Activated CD8-positive, alpha-beta T cell treated with anti-CD3 and anti-CD28 coated beads for 36 hours (primary cell): ENCODE measurements at regions of chr18 and their contacts with region 1.

Region 1: DNA sequence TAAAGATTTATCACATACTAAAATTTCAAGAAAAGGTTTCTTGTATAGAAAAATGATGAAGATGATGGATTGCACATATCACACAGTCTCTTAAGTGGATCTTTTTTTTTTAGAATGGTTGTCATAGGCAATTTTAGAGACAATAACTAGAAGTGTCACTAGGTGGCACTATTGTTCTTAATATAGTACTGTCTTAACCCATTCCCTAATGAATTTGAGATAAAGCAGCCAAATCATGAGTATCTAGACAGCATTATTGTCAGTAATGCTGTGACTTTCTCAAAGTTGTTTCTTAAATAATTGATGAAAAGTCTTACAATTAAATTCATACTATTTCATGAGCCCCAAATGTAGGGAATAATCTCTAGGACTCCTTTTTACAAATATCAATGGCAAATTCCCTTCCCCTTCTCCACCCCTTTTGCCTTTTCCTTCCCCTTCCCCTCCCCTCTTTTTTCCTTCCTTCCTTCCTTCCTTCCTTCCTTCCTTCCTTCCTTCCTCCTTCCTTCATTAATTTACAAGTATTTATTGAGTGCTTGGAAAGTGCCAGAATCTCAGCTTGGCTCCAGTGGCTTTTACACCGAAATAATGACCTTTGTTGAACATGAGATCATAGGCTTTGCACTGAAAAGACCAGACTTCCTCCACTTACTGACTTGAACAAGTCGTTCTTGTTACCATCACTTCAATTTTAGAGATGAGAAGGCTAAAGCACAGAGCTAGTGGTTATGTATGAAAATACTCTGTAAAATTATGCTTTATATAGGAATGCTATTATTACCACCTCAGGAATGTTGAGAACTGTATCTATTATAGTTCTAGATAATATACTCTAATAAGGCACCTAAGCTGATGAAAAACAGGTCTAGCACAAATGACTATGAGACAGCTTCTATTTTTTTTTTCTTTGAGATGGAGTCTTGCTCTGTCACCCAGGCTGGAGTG is 19.8 kb downstream of the MYL12B start:
- DNase-seq: no peak
- ATAC-seq: peak; percentile 88
- H3K4me3 Mint-ChIP-seq: no peak overlapping the region
- H3K27ac Mint-ChIP-seq: no peak overlapping the region
- H3K4me1 Mint-ChIP-seq: peaks cover 9% of the 10 kb centered on the region
- H3K27me3 Mint-ChIP-seq: no peaks in the 10 kb centered on the region
- CTCF ChIP-seq: peak; percentile 76

Region 2: GRCh38 chr18:3269241-3269913 is 12.4 kb before region 1 on chr18:
- CTCF ChIA-PET with region 1: no interaction called
- POLR2A ChIA-PET with region 1: no interaction called
- intact Hi-C with region 1: no loop called
- DNase-seq: no peak
- ATAC-seq: no peak
- H3K4me3 Mint-ChIP-seq: peak overlapping the region; percentile 6
- H3K27ac Mint-ChIP-seq: peak overlapping the region; percentile 77
- H3K4me1 Mint-ChIP-seq: peaks cover 82% of the 10 kb centered on the region
- H3K27me3 Mint-ChIP-seq: no peaks in the 10 kb centered on the region
- CTCF ChIP-seq: no peak

Region 3: GRCh38 chr18:3297025-3297984 is 15.6 kb after region 1 on chr18:
- CTCF ChIA-PET with region 1: interaction called, 46 read pairs
- POLR2A ChIA-PET with region 1: interaction called, 3 read pairs
- intact Hi-C with region 1: no loop called
- DNase-seq: peak; percentile 99
- ATAC-seq: peak; percentile 99
- H3K4me3 Mint-ChIP-seq: peak overlapping the region; percentile 92
- H3K27ac Mint-ChIP-seq: peak overlapping the region; percentile 86
- H3K4me1 Mint-ChIP-seq: peaks cover 5% of the 10 kb centered on the region
- H3K27me3 Mint-ChIP-seq: peaks cover 24% of the 10 kb centered on the region
- CTCF ChIP-seq: peak; percentile 83

Region 4: GRCh38 chr18:3340015-3340681 is 58.4 kb after region 1 on chr18:
- CTCF ChIA-PET with region 1: no interaction called
- POLR2A ChIA-PET with region 1: no interaction called
- intact Hi-C with region 1: no loop called
- DNase-seq: no peak
- ATAC-seq: peak; percentile 58
- H3K4me3 Mint-ChIP-seq: no peak overlapping the region
- H3K27ac Mint-ChIP-seq: no peak overlapping the region
- H3K4me1 Mint-ChIP-seq: peaks cover 9% of the 10 kb centered on the region
- H3K27me3 Mint-ChIP-seq: no peaks in the 10 kb centered on the region
- CTCF ChIP-seq: no peak

Region 5: GRCh38 chr18:3821524-3821923 is 539.8 kb after region 1 on chr18:
- CTCF ChIA-PET with region 1: no interaction called
- POLR2A ChIA-PET with region 1: no interaction called
- intact Hi-C with region 1: no loop called
- DNase-seq: no peak
- ATAC-seq: no peak
- H3K4me3 Mint-ChIP-seq: no peak overlapping the region
- H3K27ac Mint-ChIP-seq: no peak overlapping the region
- H3K4me1 Mint-ChIP-seq: no peaks in the 10 kb centered on the region
- H3K27me3 Mint-ChIP-seq: peaks cover 4% of the 10 kb centered on the region
- CTCF ChIP-seq: no peak